GM10248 (cell line): ENCODE measurements at regions of chr21 and their contacts with region 1.

Region 1: DNA sequence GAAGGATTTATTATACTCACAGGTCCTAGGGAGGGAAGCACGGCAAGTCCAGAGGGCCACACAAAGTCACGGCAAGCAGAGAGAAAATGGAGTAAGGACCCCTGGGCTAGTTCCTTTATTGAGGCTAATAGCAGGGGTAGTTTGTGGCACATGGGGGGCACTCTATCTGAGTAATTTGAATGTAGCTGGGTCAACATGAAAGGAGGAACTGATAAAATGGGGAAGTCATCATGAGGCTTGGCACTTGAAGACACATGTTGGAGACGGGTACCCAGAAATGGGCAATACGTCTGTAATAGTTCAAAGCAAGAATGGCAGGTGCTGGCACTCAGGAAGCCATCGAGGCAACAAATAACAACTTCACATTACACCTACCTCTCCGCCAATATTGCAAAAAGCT is 1136.4 kb downstream of the MRPL39 start:
- DNase-seq: no peak
- CTCF ChIP-seq: no peak

Region 2: GRCh38 chr21:24444736-24445135 is 26.1 kb before region 1 on chr21:
- CTCF ChIA-PET with region 1: no interaction called
- POLR2A ChIA-PET with region 1: no interaction called
- DNase-seq: no peak
- CTCF ChIP-seq: no peak

Region 3: GRCh38 chr21:24456358-24456757 is 14.5 kb before region 1 on chr21:
- CTCF ChIA-PET with region 1: interaction called, 10 read pairs
- POLR2A ChIA-PET with region 1: no interaction called
- DNase-seq: no peak
- CTCF ChIP-seq: no peak